Endothelial cell of umbilical vein (primary cell): ENCODE measurements at regions of chr7 and their contacts with region 1.

Region 1: GRCh38 chr7:139645572-139646523 is 122.4 kb downstream of the CLEC2L start:
- DNase-seq: peak; percentile 79
- H3K4me3 ChIP-seq: no peak overlapping the region
- H3K27ac ChIP-seq: no peak overlapping the region
- H3K4me1 ChIP-seq: peaks cover 29% of the 10 kb centered on the region
- H3K27me3 ChIP-seq: no peaks in the 10 kb centered on the region
- CTCF ChIP-seq: peak; percentile 87 to 89
- POLR2A ChIP-seq: no peak

Region 2: DNA sequence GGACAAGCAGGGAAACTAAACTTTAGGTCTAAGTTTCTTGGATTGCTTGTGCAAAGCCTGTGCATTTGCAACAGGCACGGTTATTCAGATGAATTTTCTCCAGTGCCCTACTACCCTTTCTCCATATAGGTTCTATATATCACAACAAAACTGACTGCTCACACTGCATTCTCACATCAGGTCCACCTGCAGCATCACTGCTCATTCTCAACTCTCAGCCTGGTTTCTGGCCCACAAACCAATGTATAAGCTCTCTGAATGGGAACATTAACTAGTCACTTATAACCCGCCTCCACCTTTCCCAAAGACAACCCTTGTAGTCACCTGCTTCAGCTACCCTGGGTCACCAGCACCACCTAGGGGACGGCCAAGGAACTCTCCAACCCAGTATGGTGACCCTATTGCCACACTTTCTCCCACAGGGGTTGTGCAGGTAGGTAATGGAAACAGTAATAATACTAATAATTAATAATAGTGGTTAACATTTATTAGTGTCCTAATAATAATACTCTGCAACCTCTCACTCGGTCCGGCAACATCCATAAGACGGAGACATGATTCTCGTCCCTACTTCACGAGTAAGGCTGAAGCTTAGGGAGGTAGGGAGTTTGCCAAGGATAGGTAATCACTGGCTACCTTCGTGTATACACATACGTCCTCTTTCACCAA is 25.0 kb before region 1 on chr7:
- CTCF ChIA-PET with region 1: interaction called, 28 read pairs
- POLR2A ChIA-PET with region 1: no interaction called
- dilution Hi-C with region 1: no loop called
- intact Hi-C with region 1: no loop called
- DNase-seq: peak; percentile 9
- H3K4me3 ChIP-seq: no peak overlapping the region
- H3K27ac ChIP-seq: no peak overlapping the region
- H3K4me1 ChIP-seq: no peaks in the 10 kb centered on the region
- H3K27me3 ChIP-seq: no peaks in the 10 kb centered on the region
- CTCF ChIP-seq: peak; percentile 59 to 63
- POLR2A ChIP-seq: no peak

Region 3: GRCh38 chr7:139725077-139725476 is 79.2 kb after region 1 on chr7:
- CTCF ChIA-PET with region 1: interaction called, 17 read pairs
- POLR2A ChIA-PET with region 1: no interaction called
- dilution Hi-C with region 1: no loop called
- intact Hi-C with region 1: loop called (anchors 1 kb)
- DNase-seq: peak; percentile 33
- H3K4me3 ChIP-seq: no peak overlapping the region
- H3K27ac ChIP-seq: no peak overlapping the region
- H3K4me1 ChIP-seq: peaks cover 41% of the 10 kb centered on the region
- H3K27me3 ChIP-seq: no peaks in the 10 kb centered on the region
- CTCF ChIP-seq: no peak
- POLR2A ChIP-seq: no peak

Region 4: GRCh38 chr7:139745678-139746143 is 99.9 kb after region 1 on chr7:
- CTCF ChIA-PET with region 1: interaction called, 12 read pairs
- POLR2A ChIA-PET with region 1: no interaction called
- dilution Hi-C with region 1: no loop called
- intact Hi-C with region 1: no loop called
- DNase-seq: no peak
- H3K4me3 ChIP-seq: no peak overlapping the region
- H3K27ac ChIP-seq: no peak overlapping the region
- H3K4me1 ChIP-seq: no peaks in the 10 kb centered on the region
- H3K27me3 ChIP-seq: no peaks in the 10 kb centered on the region
- CTCF ChIP-seq: no peak
- POLR2A ChIP-seq: no peak

Region 5: GRCh38 chr7:139783647-139784385 is 138.0 kb after region 1 on chr7:
- CTCF ChIA-PET with region 1: interaction called, 47 read pairs
- POLR2A ChIA-PET with region 1: no interaction called
- dilution Hi-C with region 1: no loop called
- intact Hi-C with region 1: no loop called
- DNase-seq: no peak
- H3K4me3 ChIP-seq: no peak overlapping the region
- H3K27ac ChIP-seq: no peak overlapping the region
- H3K4me1 ChIP-seq: peaks cover 1% of the 10 kb centered on the region
- H3K27me3 ChIP-seq: no peaks in the 10 kb centered on the region
- CTCF ChIP-seq: no peak
- POLR2A ChIP-seq: no peak

Region 6: DNA sequence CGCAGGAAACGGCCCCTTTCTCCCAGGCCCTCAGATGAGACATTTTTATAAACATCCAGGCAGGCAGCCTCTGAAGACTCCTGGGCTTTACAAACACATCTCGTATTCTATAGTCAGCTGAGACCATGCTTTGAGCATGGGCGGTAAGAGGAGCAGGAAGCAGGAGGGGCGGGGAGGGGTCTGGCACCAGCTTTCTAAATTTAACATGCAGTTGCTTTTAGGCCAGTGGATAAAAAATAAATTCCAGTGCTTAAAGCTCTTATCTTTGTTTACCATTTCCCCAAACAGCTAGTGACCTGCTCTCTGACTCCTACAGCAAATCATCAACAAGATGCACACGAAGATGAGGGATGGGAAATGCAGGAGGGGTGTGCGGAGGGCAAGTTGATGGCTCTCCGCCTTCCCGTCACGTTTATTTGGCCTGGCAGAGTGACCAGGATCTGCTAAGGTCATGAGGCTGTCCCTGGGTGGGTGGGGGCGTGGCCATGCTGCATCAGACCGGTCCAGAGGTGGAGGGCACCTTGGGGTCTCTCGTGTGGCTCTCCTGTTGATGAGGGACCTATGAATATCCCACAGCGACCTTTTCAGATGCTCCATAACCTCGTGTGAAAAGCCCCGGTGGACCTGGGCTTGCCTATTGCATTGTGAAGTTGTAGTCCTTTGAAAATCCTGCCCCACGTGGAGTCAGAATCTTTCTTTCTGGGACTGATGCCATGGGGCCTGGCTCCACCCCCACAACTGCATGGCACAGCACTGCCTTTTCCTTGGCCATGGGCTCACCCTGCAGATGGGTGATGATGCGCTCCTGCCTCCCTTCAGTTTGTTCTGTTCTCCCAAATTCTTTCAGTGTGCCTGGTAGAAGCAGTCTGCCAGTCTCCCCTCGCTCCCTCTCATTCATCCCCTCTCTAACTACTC is 349.4 kb after region 1 on chr7:
- CTCF ChIA-PET with region 1: interaction called, 233 read pairs
- POLR2A ChIA-PET with region 1: no interaction called
- dilution Hi-C with region 1: no loop called
- intact Hi-C with region 1: no loop called
- DNase-seq: no peak
- H3K4me3 ChIP-seq: no peak overlapping the region
- H3K27ac ChIP-seq: no peak overlapping the region
- H3K4me1 ChIP-seq: no peaks in the 10 kb centered on the region
- H3K27me3 ChIP-seq: no peaks in the 10 kb centered on the region
- CTCF ChIP-seq: no peak
- POLR2A ChIP-seq: no peak